ENCODE measurements at regions of chr1 and their contacts with region 1.

Region 1: GRCh38 chr1:224513787-224514209 is 79.2 kb upstream of the WDR26 start:
- DNase-seq: peak; percentile 77
- H3K4me3 ChIP-seq: no peak overlapping the region
- H3K27ac ChIP-seq: no peak overlapping the region
- H3K4me1 ChIP-seq: no peaks in the 10 kb centered on the region
- H3K27me3 ChIP-seq: no peaks in the 10 kb centered on the region
- CTCF ChIP-seq: peak; percentile 77 to 94 (median 91)
- POLR2A ChIP-seq: no peak

Region 2: DNA sequence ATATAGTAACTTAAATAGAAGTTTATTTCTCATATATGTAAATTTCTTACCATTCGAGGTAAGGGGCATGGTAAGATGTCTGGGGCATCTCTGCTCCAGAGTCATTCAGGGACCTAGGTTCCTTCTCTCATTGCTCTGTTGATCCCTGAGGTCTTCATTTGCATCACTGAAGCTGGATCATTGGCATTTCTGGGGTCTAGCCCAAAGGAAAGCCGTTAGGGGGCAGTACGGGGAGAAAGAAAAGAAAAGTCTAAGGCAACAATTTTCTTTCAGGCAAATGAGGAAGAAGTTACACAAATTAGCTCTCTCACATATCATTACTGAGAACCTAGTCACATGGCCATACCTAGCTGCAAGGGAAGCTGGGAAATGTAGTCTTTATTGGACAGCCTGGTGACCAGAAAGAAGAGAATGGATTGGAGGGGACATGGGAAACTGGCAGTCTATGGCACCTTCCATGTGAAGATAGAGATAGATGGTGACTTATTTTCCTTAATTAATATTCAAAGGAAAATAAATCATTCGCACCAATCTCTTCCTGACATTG is 1139.7 kb before region 1 on chr1:
- intact Hi-C with region 1: no loop called
- DNase-seq: no peak
- H3K4me3 ChIP-seq: no peak overlapping the region
- H3K27ac ChIP-seq: no peak overlapping the region
- H3K4me1 ChIP-seq: no peaks in the 10 kb centered on the region
- H3K27me3 ChIP-seq: no peaks in the 10 kb centered on the region
- CTCF ChIP-seq: no peak
- POLR2A ChIP-seq: no peak

Region 3: GRCh38 chr1:224644553-224645154 is 130.9 kb after region 1 on chr1:
- intact Hi-C with region 1: loop called (anchors 10 kb)
- DNase-seq: peak; percentile 17
- H3K4me3 ChIP-seq: no peak overlapping the region
- H3K27ac ChIP-seq: no peak overlapping the region
- H3K4me1 ChIP-seq: no peaks in the 10 kb centered on the region
- H3K27me3 ChIP-seq: no peaks in the 10 kb centered on the region
- CTCF ChIP-seq: peak; percentile 71 to 80 (median 76)
- POLR2A ChIP-seq: no peak

Region 4: GRCh38 chr1:224800486-224801119 is 286.8 kb after region 1 on chr1:
- intact Hi-C with region 1: no loop called
- DNase-seq: no peak
- H3K4me3 ChIP-seq: no peak overlapping the region
- H3K27ac ChIP-seq: no peak overlapping the region
- H3K4me1 ChIP-seq: no peaks in the 10 kb centered on the region
- H3K27me3 ChIP-seq: no peaks in the 10 kb centered on the region
- CTCF ChIP-seq: no peak
- POLR2A ChIP-seq: no peak

Region 5: DNA sequence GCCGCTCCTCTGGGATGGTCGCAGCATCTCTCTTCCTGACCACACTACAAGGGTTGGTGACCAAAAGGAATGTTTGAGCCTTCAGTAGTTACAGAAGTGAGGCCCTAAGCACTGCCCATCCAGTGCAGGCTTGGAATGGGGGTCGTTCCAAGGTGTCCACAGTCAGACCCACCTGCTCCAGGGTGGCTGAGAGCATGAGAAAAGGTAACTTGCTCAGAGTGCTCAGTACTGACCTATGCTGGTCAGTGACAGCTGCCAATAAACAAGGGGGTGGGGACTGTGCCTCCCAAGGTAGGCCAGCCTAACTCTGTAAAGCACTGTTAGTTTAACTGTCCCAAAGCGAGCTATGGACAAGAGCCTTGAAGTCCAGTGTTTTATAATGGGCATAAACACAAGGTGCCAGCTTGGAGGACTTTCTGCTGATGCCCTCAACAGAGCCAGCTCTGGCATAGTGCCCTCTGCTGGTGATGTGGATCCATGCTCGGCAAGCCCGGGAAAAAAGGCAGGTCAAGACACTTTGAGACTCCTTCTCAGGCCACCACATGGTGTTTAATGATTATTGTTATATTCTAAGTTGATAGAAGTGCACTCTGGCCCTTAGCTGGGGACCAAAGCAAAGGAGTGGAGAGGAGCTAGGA is 337.5 kb after region 1 on chr1:
- intact Hi-C with region 1: loop called (anchors 2 kb)
- DNase-seq: peak; percentile 58
- H3K4me3 ChIP-seq: no peak overlapping the region
- H3K27ac ChIP-seq: no peak overlapping the region
- H3K4me1 ChIP-seq: no peaks in the 10 kb centered on the region
- H3K27me3 ChIP-seq: no peaks in the 10 kb centered on the region
- CTCF ChIP-seq: peak in 3 of 4 experiments; percentile 46 to 60 (median 55)
- POLR2A ChIP-seq: no peak

Region 6: GRCh38 chr1:224873434-224874369 is 359.9 kb after region 1 on chr1:
- intact Hi-C with region 1: no loop called
- DNase-seq: peak; percentile 16
- H3K4me3 ChIP-seq: no peak overlapping the region
- H3K27ac ChIP-seq: no peak overlapping the region
- H3K4me1 ChIP-seq: peaks cover 5% of the 10 kb centered on the region
- H3K27me3 ChIP-seq: no peaks in the 10 kb centered on the region
- CTCF ChIP-seq: no peak
- POLR2A ChIP-seq: no peak

Region 7: GRCh38 chr1:224922404-224923164 is 408.8 kb after region 1 on chr1:
- intact Hi-C with region 1: loop called (anchors 5 kb)
- DNase-seq: no peak
- H3K4me3 ChIP-seq: no peak overlapping the region
- H3K27ac ChIP-seq: no peak overlapping the region
- H3K4me1 ChIP-seq: no peaks in the 10 kb centered on the region
- H3K27me3 ChIP-seq: no peaks in the 10 kb centered on the region
- CTCF ChIP-seq: peak; percentile 39 to 81 (median 75)
- POLR2A ChIP-seq: no peak